ENCODE measurements at regions of chr18 and their contacts with region 1.

Region 1: DNA sequence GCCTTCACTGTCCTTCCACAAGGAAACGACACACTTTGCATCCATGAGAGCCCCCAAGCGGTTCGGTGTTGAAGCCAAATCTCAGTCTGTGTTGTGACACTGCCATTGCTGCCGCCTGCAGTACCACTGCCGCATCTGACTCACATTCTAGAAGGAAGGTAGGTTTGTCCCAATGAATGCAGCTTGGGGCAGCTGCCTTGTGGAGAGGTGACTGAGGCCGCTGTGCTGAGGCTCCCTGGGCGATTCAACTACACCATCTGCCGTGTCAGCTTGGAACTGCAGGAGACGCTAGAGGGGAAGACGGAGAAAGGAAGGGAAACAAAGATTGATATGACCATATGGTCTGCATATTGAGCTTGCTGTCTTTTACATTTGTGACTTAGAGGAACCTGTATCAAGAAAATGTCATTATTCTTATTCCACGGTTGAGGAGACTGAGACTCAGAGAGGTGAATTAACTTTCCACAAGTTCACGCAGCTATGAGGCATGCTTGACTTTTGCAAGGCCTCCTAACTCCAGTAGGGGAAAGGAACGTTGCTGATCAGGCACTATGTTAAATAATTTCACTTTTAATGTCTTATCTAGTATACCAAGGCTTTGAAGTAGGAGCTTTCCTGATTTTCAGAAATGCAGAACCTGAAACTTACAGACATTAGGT is 43.5 kb upstream of the LMAN1 start:
- DNase-seq: peak; percentile 80
- H3K4me3 Mint-ChIP-seq: no peak overlapping the region
- H3K27ac Mint-ChIP-seq: no peak overlapping the region
- H3K4me1 Mint-ChIP-seq: no peaks in the 10 kb centered on the region
- H3K27me3 Mint-ChIP-seq: peaks cover 5% of the 10 kb centered on the region

Region 2: DNA sequence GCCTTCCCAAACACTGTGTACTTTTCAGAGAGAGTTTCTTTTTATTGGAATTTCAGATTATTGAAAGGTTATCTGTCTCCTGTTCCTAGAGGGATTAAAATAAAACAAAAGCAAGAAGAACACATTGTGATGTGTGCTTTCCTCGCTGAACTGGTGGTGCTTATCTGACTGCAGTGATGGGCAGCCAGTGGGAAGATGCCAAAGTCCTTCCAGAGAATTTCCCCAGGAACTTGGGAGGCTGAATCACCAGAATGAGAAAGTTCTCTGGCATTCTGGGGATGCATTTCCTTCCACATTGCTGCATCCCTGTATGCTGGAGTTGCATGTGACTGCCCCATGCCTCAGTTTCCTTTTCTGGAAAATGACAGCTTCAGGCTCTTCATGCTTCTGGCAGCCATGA is 316.8 kb before region 1 on chr18:
- CTCF ChIA-PET with region 1: interaction called, 14 read pairs
- DNase-seq: no peak
- H3K4me3 Mint-ChIP-seq: no peak overlapping the region
- H3K27ac Mint-ChIP-seq: no peak overlapping the region
- H3K4me1 Mint-ChIP-seq: no peaks in the 10 kb centered on the region
- H3K27me3 Mint-ChIP-seq: peaks cover 41% of the 10 kb centered on the region

Region 3: GRCh38 chr18:59249205-59249774 is 153.3 kb before region 1 on chr18:
- CTCF ChIA-PET with region 1: interaction called, 62 read pairs
- DNase-seq: peak; percentile 57
- H3K4me3 Mint-ChIP-seq: no peak overlapping the region
- H3K27ac Mint-ChIP-seq: no peak overlapping the region
- H3K4me1 Mint-ChIP-seq: no peaks in the 10 kb centered on the region
- H3K27me3 Mint-ChIP-seq: peaks cover 19% of the 10 kb centered on the region

Region 4: GRCh38 chr18:59268721-59269562 is 133.6 kb before region 1 on chr18:
- CTCF ChIA-PET with region 1: interaction called, 12 read pairs
- DNase-seq: peak; percentile 61
- H3K4me3 Mint-ChIP-seq: no peak overlapping the region
- H3K27ac Mint-ChIP-seq: peak overlapping the region; percentile 52
- H3K4me1 Mint-ChIP-seq: peaks cover 40% of the 10 kb centered on the region
- H3K27me3 Mint-ChIP-seq: peaks cover 100% of the 10 kb centered on the region

Region 5: DNA sequence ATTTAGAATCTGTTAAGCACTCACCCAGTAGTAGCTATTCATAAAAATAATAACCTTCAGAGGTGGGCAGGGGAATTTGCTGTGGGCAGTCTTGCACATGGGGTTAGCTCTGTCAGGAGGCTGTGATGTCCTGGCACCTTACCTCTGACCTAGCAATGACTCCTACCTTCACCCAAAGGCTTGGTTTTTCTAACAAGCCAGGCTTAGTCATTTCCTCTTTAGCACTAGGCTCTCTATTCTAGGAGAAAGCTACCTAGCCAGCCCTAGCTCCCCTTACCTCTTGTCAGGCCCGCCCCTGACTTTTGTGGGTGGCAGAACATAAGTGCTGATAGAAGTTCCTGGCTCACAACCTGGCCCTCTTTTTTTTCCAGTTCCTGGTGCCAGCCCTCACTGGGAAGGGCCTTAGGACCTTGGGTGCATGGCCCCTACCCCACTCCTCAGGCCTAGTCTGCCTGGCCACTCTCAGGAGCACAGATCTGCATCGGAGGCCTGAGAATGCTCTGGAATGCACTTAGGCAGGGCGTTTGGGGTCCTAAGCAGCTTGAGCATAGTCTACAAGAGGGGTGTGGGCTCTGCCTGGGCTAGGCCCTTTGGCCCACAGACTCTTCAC is 101.8 kb before region 1 on chr18:
- CTCF ChIA-PET with region 1: interaction called, 20 read pairs
- DNase-seq: no peak
- H3K4me3 Mint-ChIP-seq: no peak overlapping the region
- H3K27ac Mint-ChIP-seq: no peak overlapping the region
- H3K4me1 Mint-ChIP-seq: peaks cover 3% of the 10 kb centered on the region
- H3K27me3 Mint-ChIP-seq: peaks cover 49% of the 10 kb centered on the region

Region 6: GRCh38 chr18:59308248-59308937 is 94.2 kb before region 1 on chr18:
- CTCF ChIA-PET with region 1: interaction called, 100 read pairs
- DNase-seq: peak; percentile 73
- H3K4me3 Mint-ChIP-seq: peak overlapping the region; percentile 31
- H3K27ac Mint-ChIP-seq: no peak overlapping the region
- H3K4me1 Mint-ChIP-seq: no peaks in the 10 kb centered on the region
- H3K27me3 Mint-ChIP-seq: peaks cover 51% of the 10 kb centered on the region

Region 7: GRCh38 chr18:59387687-59388565 is 14.6 kb before region 1 on chr18:
- CTCF ChIA-PET with region 1: interaction called, 14 read pairs
- DNase-seq: no peak
- H3K4me3 Mint-ChIP-seq: no peak overlapping the region
- H3K27ac Mint-ChIP-seq: no peak overlapping the region
- H3K4me1 Mint-ChIP-seq: no peaks in the 10 kb centered on the region
- H3K27me3 Mint-ChIP-seq: peaks cover 14% of the 10 kb centered on the region

Measured in activated naive CD4-positive, alpha-beta T cell treated with anti-CD3 and anti-CD28 coated beads, Interleukin-2, amount 10 ng/mL, durations not matched to agents 7 days and 5 days (primary cell).